GM12878 (cell line): ENCODE measurements at regions of chr3 and their contacts with region 1.

Region 1: GRCh38 chr3:171459942-171460724 is at the start of gene TNIK:
- DNase-seq: peak; percentile 95
- ATAC-seq: peak; percentile 85
- H3K4me3 ChIP-seq: peak within 1 kb of the TSS; percentile 98
- H3K27ac ChIP-seq: peak within 1 kb of the TSS; percentile 80
- H3K4me1 ChIP-seq: peaks cover 10% of the 10 kb centered on the region
- H3K27me3 ChIP-seq: no peaks in the 10 kb centered on the region
- CTCF ChIP-seq: peak in 2 of 3 experiments; percentile 26 to 44; a peak in 2 of 6 replicates
- EP300 ChIP-seq: peak; percentile 40 to 60; a peak in 2 of 4 replicates
- POLR2A ChIP-seq: peak; percentile 91
- RAD21 ChIP-seq: peak; percentile 23; the same call in 1 of the 2 replicates
- polyA plus RNA-seq, gene TNIK: 13.9 to 15.9 TPM

Region 2: GRCh38 chr3:171257251-171258203 is 202.6 kb before region 1 on chr3:
- CTCF ChIA-PET with region 1: interaction called, 3 read pairs
- POLR2A ChIA-PET with region 1: interaction called, 3 read pairs
- RAD21 ChIA-PET with region 1: interaction called, 5 read pairs
- SMC1A ChIA-PET with region 1: interaction called, 3 read pairs
- in situ Hi-C with region 1: no loop called
- intact Hi-C with region 1: loop called (anchors 2 kb)
- DNase-seq: peak; percentile 76
- ATAC-seq: peak; percentile 74
- H3K4me3 ChIP-seq: peak overlapping the region; percentile 31; the same call in 1 of the 2 replicates
- H3K27ac ChIP-seq: peak overlapping the region; percentile 87
- H3K4me1 ChIP-seq: peaks cover 86% of the 10 kb centered on the region
- H3K27me3 ChIP-seq: no peaks in the 10 kb centered on the region
- CTCF ChIP-seq: no peak
- EP300 ChIP-seq: peak in 1 of 2 experiments; percentile 63; a peak in 2 of 4 replicates
- POLR2A ChIP-seq: no peak
- RAD21 ChIP-seq: 0 out of 2 replicates have a peak, but pooled peaks have one; percentile 10

Region 3: GRCh38 chr3:171410186-171410585 is 49.9 kb before region 1 on chr3:
- CTCF ChIA-PET with region 1: interaction called, 4 read pairs
- POLR2A ChIA-PET with region 1: no interaction called
- RAD21 ChIA-PET with region 1: interaction called, 4 read pairs
- SMC1A ChIA-PET with region 1: interaction called, 10 read pairs
- in situ Hi-C with region 1: no loop called
- intact Hi-C with region 1: no loop called
- DNase-seq: no peak
- ATAC-seq: no peak
- H3K4me3 ChIP-seq: no peak overlapping the region
- H3K27ac ChIP-seq: no peak overlapping the region
- H3K4me1 ChIP-seq: peaks cover 21% of the 10 kb centered on the region
- H3K27me3 ChIP-seq: no peaks in the 10 kb centered on the region
- CTCF ChIP-seq: no peak
- EP300 ChIP-seq: no peak
- POLR2A ChIP-seq: no peak
- RAD21 ChIP-seq: no peak

Region 4: GRCh38 chr3:171561596-171562323 is 101.6 kb after region 1 on chr3:
- CTCF ChIA-PET with region 1: interaction called, 10 read pairs
- POLR2A ChIA-PET with region 1: no interaction called
- RAD21 ChIA-PET with region 1: interaction called, 6 read pairs
- SMC1A ChIA-PET with region 1: interaction called, 12 read pairs
- in situ Hi-C with region 1: no loop called
- intact Hi-C with region 1: loop called (anchors 2 kb)
- DNase-seq: peak; percentile 36
- ATAC-seq: peak; percentile 78
- H3K4me3 ChIP-seq: no peak overlapping the region
- H3K27ac ChIP-seq: no peak overlapping the region
- H3K4me1 ChIP-seq: peaks cover 8% of the 10 kb centered on the region
- H3K27me3 ChIP-seq: no peaks in the 10 kb centered on the region
- CTCF ChIP-seq: no peak
- EP300 ChIP-seq: no peak
- POLR2A ChIP-seq: no peak
- RAD21 ChIP-seq: no peak

Region 5: GRCh38 chr3:171932153-171932611 is 472.0 kb after region 1 on chr3:
- CTCF ChIA-PET with region 1: no interaction called
- POLR2A ChIA-PET with region 1: no interaction called
- RAD21 ChIA-PET with region 1: no interaction called
- SMC1A ChIA-PET with region 1: no interaction called
- in situ Hi-C with region 1: no loop called
- intact Hi-C with region 1: no loop called
- DNase-seq: no peak
- ATAC-seq: no peak
- H3K4me3 ChIP-seq: no peak overlapping the region
- H3K27ac ChIP-seq: no peak overlapping the region
- H3K4me1 ChIP-seq: no peaks in the 10 kb centered on the region
- H3K27me3 ChIP-seq: no peaks in the 10 kb centered on the region; a peak in 2 of 4 replicates
- CTCF ChIP-seq: no peak
- EP300 ChIP-seq: no peak
- POLR2A ChIP-seq: no peak
- RAD21 ChIP-seq: no peak

Region 6: DNA sequence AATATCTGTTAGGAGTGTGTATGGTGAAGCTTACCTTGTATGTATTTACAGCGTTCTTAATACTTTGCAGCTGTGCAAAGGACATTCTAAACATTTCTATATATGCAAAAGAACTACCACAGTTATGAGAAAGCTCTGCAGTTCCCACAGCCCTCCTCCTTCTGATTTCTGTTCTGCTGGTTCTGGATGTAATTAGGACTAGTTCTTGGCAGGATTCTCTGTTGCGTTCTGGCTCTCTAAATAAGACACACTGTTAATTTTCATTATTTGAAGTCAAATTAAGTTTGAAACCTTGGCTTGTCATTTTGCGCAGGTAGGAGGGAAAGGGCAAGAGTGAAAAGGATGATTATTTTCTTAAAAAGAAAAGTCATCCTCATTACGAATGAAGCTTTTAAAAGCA is 655.7 kb after region 1 on chr3:
- CTCF ChIA-PET with region 1: no interaction called
- POLR2A ChIA-PET with region 1: no interaction called
- RAD21 ChIA-PET with region 1: no interaction called
- SMC1A ChIA-PET with region 1: no interaction called
- in situ Hi-C with region 1: no loop called
- intact Hi-C with region 1: no loop called
- DNase-seq: no peak
- ATAC-seq: no peak
- H3K4me3 ChIP-seq: no peak overlapping the region
- H3K27ac ChIP-seq: no peak overlapping the region
- H3K4me1 ChIP-seq: no peaks in the 10 kb centered on the region
- H3K27me3 ChIP-seq: no peaks in the 10 kb centered on the region
- CTCF ChIP-seq: no peak
- EP300 ChIP-seq: no peak
- POLR2A ChIP-seq: no peak
- RAD21 ChIP-seq: no peak